B cell (primary cell): ENCODE measurements at regions of chr19 and their contacts with region 1.

Region 1: DNA sequence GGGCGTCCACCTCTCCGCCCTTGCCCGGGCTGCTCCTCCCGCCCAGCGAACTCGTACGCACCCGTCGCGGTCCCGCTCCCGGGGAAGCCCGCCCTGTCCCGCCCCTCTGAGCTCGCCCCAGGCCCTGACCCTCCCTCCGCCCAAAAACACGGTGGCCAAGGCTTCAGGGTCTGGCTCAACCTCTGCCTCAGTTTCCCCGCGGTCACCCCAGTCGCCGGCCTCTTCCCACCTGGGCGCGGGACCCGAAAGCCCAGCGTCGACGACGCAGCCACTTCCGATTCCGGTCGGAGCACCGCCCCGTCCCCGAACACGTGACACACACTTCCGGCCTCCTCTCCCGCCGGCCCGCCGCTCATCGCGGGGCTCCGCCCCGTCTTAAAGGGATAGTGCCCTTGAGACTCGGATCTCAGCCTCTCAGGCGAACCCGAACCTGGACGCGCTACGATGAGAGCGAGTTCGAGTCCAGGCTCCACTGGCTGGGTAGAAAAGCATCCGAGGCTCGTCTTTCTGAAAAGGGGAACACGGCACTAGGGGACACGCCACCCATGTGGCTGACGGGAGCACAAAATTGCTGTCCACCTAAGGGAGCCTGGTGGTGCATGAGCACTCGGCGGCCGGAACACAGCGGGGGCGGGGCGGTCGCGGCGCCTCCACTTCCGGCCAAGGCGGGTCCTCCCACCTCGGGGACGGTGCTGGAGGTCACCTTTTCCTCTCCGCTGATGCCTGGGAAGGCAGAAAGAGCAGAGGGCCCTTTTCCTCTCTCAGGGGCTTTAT is at the start of gene C19orf25:
- DNase-seq: peak; percentile 94
- ATAC-seq: peak; percentile 94
- H3K4me3 ChIP-seq: peak within 1 kb of the TSS; percentile 50 to 92 (median 79)
- H3K4me3 Mint-ChIP-seq: peak within 1 kb of the TSS; percentile 97
- H3K27ac ChIP-seq: peak within 1 kb of the TSS; percentile 71 to 83
- H3K27ac Mint-ChIP-seq: peak within 1 kb of the TSS; percentile 93
- H3K4me1 ChIP-seq: peaks cover 6 to 22% of the 10 kb centered on the region in 2 donors
- H3K4me1 Mint-ChIP-seq: peaks cover 13% of the 10 kb centered on the region
- H3K27me3 ChIP-seq: no peaks in the 10 kb centered on the region
- H3K27me3 Mint-ChIP-seq: no peaks in the 10 kb centered on the region
- CTCF ChIP-seq: no peak
- total RNA-seq, gene C19orf25: 68.1 and 68.3 TPM in 2 replicates

Region 2: DNA sequence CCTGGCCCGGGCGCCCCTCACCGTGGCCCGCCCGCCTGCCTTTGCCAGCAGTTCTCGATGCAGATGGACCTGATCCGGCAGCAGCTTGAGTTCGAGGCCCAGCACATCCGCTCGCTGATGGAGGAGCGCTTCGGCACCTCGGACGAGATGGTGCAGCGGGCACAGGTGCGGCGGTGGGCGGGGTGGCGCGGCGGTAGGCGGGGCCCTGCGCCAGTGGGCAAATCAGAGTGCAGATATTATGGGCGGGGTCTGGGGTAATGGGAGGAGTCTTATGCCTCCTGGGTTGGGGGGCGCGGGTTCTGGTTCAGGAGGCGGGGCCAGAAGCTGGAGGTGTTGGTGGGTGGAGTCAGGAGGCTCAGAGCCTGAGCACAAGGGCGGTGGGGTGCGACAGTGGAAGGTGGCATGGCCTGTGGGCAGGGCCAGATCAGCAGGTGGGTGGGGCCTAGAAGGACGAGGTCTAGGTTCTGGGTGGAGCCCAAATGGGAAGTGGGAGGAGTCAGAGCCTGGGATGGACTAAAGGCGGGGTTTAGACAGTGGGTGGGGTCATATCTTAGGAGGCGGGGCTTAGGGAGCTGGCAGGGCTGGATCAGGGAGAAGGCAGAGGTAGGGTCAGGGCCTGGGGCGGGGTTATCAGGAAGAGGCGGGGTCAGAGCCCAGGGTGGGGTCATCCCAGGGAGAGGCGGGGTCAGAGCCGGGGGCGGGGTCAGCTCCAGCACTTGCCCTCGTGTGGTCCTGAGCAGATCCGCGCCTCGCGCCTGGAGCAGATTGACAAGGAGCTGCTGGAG is 23.6 kb before region 1 on chr19:
- CTCF ChIA-PET with region 1: no interaction called
- POLR2A ChIA-PET with region 1: interaction called, 10 read pairs
- intact Hi-C with region 1: no loop called
- DNase-seq: peak; percentile 68
- ATAC-seq: peak; percentile 67
- H3K4me3 ChIP-seq: peak overlapping the region in 3 of 5 experiments; percentile 12 to 29 (median 15)
- H3K4me3 Mint-ChIP-seq: peak overlapping the region; percentile 66
- H3K27ac ChIP-seq: no peak overlapping the region
- H3K27ac Mint-ChIP-seq: no peak overlapping the region
- H3K4me1 ChIP-seq: peaks cover 33 to 35% of the 10 kb centered on the region in 2 donors
- H3K4me1 Mint-ChIP-seq: peaks cover 21% of the 10 kb centered on the region
- H3K27me3 ChIP-seq: peaks cover 0 to 69% (median 41%) of the 10 kb centered on the region in 4 experiments
- H3K27me3 Mint-ChIP-seq: peaks cover 34% of the 10 kb centered on the region
- CTCF ChIP-seq: no peak

Region 3: GRCh38 chr19:1507763-1508509 is 28.8 kb after region 1 on chr19:
- CTCF ChIA-PET with region 1: no interaction called
- POLR2A ChIA-PET with region 1: no interaction called
- intact Hi-C with region 1: loop called (anchors 1 kb)
- DNase-seq: peak; percentile 93
- ATAC-seq: peak; percentile 91
- H3K4me3 ChIP-seq: peak overlapping the region in 4 of 5 experiments; percentile 18 to 45 (median 42)
- H3K4me3 Mint-ChIP-seq: peak overlapping the region; percentile 85
- H3K27ac ChIP-seq: no peak overlapping the region
- H3K27ac Mint-ChIP-seq: peak overlapping the region; percentile 88
- H3K4me1 ChIP-seq: peaks cover 19 to 24% of the 10 kb centered on the region in 2 donors
- H3K4me1 Mint-ChIP-seq: peaks cover 12% of the 10 kb centered on the region
- H3K27me3 ChIP-seq: peaks cover 0 to 79% (median 20%) of the 10 kb centered on the region in 4 experiments
- H3K27me3 Mint-ChIP-seq: peaks cover 41% of the 10 kb centered on the region
- CTCF ChIP-seq: no peak